ENCODE measurements at regions of chr6 and their contacts with region 1.

Region 1: DNA sequence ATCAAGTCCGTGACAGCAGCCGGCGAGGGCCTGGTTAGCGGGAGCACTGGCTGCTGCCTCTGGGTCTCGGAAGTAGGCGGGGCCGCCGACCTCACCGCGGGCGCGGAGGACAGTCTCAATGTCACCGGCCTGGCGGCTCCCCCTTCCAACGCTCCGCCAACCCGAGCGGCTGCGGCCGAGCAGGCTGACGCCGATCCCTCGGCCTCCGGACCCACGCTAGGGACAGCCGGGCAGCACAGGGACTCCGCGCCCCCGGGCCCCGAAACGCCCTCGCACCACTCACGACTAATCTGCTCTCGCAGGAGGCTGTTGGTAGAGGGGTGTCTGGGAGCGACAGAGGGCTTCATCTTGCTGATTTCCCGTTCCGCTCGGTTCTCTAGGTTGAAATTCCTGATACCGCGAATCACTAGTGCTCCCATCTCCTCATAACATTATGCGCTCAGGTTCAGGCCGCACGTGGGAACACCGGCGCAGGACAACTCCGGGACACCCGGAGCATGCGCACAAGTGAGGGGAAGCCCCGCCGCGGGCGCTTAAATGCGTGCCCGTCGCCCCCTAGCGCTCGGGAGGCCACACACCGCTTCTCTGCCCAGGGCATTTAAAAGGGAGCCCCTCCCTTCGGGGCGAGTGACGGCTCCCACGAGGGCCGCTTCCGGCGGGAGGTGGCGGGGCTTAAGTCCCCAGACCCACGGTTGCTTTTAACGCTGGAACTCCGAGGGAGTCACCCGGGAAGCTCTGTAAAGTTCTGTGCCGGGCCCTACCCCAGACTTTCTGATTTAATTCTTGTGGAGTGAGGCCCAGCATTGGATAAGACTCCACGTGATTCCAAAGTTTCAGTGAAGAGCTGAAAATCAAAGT is at the start of gene NDUFAF4:
- DNase-seq: peak; percentile 98
- H3K4me3 ChIP-seq: peak within 1 kb of the TSS; percentile 60
- H3K27ac ChIP-seq: peak within 1 kb of the TSS; percentile 80
- H3K4me1 ChIP-seq: no peaks in the 10 kb centered on the region
- H3K27me3 ChIP-seq: no peaks in the 10 kb centered on the region
- CTCF ChIP-seq: peak; percentile 88
- total RNA-seq, gene NDUFAF4: 35.3 to 48.2 TPM

Region 2: GRCh38 chr6:96521644-96522464 is 375.8 kb before region 1 on chr6 and contains the start of gene UFL1:
- intact Hi-C with region 1: loop called (anchors 10 kb)
- DNase-seq: peak; percentile 94
- H3K4me3 ChIP-seq: peak within 1 kb of the TSS; percentile 67
- H3K27ac ChIP-seq: peak within 1 kb of the TSS; percentile 98
- H3K4me1 ChIP-seq: peaks cover 6% of the 10 kb centered on the region
- H3K27me3 ChIP-seq: no peaks in the 10 kb centered on the region
- CTCF ChIP-seq: no peak
- total RNA-seq, gene UFL1: 21.5 to 28.6 TPM

Region 3: DNA sequence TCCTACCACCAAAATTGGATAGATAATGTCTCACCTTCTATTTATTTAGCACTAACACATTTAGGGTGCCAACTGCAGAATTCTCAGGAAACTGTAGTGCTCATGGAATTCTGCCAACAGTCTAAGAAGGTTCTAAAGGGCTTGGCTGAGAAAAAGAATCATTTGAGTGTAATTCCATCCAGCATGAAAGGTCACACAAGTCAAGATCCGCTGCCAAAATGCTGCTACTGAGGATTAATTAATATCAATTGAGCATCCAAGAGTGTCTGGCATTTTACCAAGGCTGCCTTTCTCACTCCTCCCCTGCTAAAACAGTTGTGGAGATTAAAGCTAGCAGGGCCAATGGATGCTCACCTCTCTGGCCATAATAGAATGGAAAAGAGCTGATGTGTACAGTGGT is 222.0 kb before region 1 on chr6:
- intact Hi-C with region 1: no loop called
- DNase-seq: no peak
- H3K4me3 ChIP-seq: no peak overlapping the region
- H3K27ac ChIP-seq: no peak overlapping the region
- H3K4me1 ChIP-seq: no peaks in the 10 kb centered on the region
- H3K27me3 ChIP-seq: no peaks in the 10 kb centered on the region
- CTCF ChIP-seq: no peak

Region 4: DNA sequence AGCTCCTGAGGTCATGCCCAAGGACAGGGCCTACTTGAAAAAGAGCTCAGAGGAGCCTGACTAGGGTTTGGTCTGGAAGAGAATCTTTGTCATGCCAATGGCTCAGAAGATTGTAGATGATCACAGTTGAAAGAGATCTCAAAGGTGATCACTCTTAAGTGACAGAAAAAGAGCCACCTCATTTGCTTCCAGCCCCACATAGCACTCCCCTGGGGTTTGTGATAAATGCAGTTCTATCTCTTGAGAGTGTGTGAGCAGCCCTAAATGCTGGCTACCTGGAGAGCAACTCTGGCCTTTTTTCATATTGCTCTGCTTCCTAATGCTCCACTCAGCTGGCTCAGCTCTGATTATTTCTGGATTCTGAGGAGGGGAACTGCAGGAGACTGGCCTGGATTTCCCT is 66.2 kb after region 1 on chr6:
- intact Hi-C with region 1: no loop called
- DNase-seq: no peak
- H3K4me3 ChIP-seq: no peak overlapping the region
- H3K27ac ChIP-seq: no peak overlapping the region
- H3K4me1 ChIP-seq: no peaks in the 10 kb centered on the region
- H3K27me3 ChIP-seq: no peaks in the 10 kb centered on the region
- CTCF ChIP-seq: no peak

Region 5: DNA sequence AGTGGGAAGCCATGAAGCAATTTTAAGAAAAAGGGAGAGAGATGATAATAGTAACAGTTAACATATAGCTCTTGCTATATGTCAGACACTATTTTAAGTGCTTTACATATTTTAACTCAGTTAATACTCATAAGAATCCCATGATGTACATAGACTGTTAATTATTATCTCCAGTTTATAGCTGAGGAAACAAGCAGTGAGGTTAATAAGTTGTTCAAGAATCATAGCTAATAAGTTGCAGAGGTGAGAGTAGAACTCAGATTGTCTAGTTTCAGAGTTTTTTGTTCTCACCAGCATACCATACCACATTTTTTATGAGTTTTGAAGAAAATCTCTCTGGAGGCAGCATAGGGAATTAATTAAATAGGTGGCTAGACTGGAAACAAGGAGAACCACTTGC is 530.0 kb after region 1 on chr6:
- intact Hi-C with region 1: no loop called
- DNase-seq: no peak
- H3K4me3 ChIP-seq: no peak overlapping the region
- H3K27ac ChIP-seq: no peak overlapping the region
- H3K4me1 ChIP-seq: no peaks in the 10 kb centered on the region
- H3K27me3 ChIP-seq: no peaks in the 10 kb centered on the region
- CTCF ChIP-seq: no peak

Measured in colonic mucosa (tissue), 4 donors.